Activated T-helper 1 cell treated with anti-CD3 and anti-CD28 coated beads, Interleukin-12 subunit alpha, Interleukin-12 subunit beta, Interleukin-2, Interleukin-4 antibody, amounts not matched to agents 30 ng/mL and 10 ng/mL and 1 ng/mL, durations not matched to agents 14 hours and 24 hours and 36 hours (primary cell): ENCODE measurements at regions of chr3 and their contacts with region 1.

Region 1: DNA sequence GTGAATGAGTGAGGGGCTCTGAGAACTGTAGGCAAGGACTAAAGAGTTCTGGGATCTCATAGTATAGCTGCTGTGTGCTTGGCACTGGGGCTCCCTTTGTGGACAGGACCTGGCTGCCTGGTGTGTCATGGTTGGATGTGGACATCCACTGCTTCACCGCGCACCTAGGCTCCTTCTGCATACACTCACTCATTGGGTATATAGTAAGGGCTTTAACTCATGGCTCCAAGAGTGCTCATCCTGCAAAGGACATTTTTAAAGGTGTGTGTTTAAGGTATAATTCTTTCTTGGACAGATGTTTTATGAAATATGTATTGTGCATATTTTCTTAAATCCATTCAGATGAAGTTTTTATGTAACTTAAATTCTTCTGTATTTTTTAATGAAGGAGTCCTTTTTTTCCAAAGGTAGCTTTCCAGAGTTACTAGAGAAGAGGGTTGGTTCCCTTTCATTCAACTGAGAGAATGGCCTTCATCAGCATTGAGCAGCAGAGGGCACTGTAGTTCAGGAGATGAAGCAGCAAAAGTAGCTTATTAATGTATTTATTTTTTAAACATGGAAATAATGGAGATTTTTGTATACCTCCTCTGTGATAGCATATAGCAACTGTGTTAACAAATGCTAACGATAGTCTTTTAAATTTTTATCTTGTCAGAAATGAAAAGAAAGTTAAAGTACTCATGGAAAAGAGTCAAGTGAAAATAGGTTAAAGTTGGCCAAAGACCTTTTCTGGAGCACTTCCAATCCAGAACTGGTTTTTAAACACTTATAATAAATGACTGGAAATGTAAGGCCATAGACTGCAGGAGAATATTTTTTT is 25.2 kb downstream of the OXNAD1 start:
- DNase-seq: no peak
- H3K4me3 Mint-ChIP-seq: peak overlapping the region; percentile 91
- H3K27ac Mint-ChIP-seq: peak overlapping the region; percentile 80
- H3K4me1 Mint-ChIP-seq: peaks cover 80% of the 10 kb centered on the region
- H3K27me3 Mint-ChIP-seq: no peaks in the 10 kb centered on the region

Region 2: DNA sequence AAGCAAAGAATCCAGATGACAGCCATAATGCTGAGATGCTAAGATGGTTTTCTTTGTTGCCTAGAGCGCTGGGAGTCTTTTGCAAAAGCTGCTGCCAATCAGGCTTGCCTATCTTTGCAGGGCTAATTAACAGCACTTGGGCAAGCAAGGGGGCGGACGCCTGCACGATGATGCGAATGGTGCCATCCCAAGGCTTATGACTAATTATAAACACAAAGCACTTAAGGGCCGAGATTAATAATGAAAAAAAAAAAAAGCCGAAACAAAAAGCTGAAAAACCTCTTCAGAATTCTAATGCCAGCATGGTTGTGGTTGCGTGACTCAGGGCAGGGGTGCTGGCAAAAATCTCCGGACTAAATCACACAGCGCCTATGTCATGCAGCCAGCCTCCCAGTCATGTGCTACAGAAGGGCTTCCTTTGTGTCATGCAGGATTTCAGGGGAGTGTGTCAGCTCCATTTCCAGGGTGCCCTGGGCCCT is 307.5 kb before region 1 on chr3:
- intact Hi-C with region 1: no loop called
- DNase-seq: no peak
- H3K4me3 Mint-ChIP-seq: no peak overlapping the region
- H3K27ac Mint-ChIP-seq: no peak overlapping the region
- H3K4me1 Mint-ChIP-seq: no peaks in the 10 kb centered on the region
- H3K27me3 Mint-ChIP-seq: peaks cover 8% of the 10 kb centered on the region

Region 3: DNA sequence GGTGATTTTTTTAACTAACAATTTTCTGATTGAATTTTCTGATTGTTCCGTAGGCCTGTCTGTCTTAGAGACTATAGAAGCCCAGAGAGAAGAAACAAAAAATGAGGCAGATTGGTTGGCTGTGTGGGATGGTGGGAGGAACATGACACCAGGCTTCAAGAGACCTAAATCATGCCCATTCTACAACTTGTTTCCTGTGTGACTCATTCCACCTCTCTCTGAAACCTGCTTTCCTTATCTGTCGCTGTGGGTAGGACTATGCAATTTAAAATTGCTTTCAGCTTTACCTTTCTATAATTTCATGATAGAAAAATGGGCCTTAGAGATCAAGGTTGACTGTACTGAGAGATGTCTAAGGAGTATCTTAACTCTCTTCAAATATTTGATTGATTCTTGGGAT is 19.3 kb after region 1 on chr3:
- intact Hi-C with region 1: loop called (anchors 1 kb)
- DNase-seq: peak; percentile 50
- H3K4me3 Mint-ChIP-seq: peak overlapping the region; percentile 72
- H3K27ac Mint-ChIP-seq: peak overlapping the region; percentile 92
- H3K4me1 Mint-ChIP-seq: peaks cover 84% of the 10 kb centered on the region
- H3K27me3 Mint-ChIP-seq: no peaks in the 10 kb centered on the region

Region 4: DNA sequence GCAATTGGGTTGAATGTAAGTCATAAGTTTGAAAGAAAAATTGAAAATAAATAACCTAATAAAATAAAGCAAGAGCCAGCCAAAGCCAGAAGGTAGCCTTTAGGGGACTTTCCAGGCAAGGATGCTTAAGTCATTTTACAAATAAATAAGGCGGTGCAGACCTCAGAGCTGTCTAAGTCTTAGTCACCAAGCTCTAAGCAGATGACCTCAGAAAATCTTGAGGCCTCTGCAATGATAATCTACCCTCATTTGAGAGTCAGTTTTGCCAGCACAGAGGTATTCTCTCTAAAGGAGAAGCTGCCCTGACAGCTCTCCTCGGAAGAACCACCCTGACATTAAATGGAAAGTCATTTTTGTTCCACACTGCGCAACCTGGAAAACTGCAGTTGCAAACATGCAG is 88.7 kb after region 1 on chr3:
- intact Hi-C with region 1: loop called (anchors 2 kb)
- DNase-seq: peak; percentile 28
- H3K4me3 Mint-ChIP-seq: peak overlapping the region; percentile 31
- H3K27ac Mint-ChIP-seq: peak overlapping the region; percentile 94
- H3K4me1 Mint-ChIP-seq: peaks cover 95% of the 10 kb centered on the region
- H3K27me3 Mint-ChIP-seq: no peaks in the 10 kb centered on the region

Region 5: DNA sequence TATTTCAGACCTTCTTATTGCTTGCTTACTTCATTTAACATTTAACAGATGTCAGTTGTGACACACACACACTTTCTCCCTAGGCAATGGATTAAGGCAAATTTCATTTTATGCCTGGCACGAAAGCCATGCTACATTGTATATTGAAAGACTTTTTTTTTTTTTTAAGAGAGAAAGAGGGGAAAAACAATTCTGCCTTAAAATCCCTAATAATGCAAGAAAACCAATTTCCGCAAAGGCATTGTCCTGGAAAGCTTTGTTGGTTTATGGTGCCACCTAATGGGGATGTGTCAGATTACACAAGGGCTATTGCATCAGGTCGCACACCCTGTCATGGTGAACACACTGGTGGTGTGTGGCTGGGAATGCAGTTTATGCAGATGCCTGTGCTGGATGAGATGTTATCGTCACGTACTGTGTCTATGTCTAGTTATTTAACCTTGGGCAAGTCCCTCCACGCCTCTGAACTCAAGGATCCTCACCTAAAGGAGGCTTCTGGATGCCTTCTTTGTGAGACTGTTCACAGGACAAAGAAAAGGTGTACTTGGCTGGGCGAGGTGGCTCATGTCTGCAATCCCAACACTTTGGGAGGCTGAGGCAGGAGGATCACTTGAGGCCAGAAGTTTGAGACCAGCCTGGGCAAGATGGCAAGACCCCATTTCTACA is 260.6 kb after region 1 on chr3:
- intact Hi-C with region 1: loop called (anchors 1 kb)
- DNase-seq: peak; percentile 67
- H3K4me3 Mint-ChIP-seq: no peak overlapping the region
- H3K27ac Mint-ChIP-seq: peak overlapping the region; percentile 71
- H3K4me1 Mint-ChIP-seq: peaks cover 27% of the 10 kb centered on the region
- H3K27me3 Mint-ChIP-seq: peaks cover 6% of the 10 kb centered on the region

Region 6: GRCh38 chr3:16896820-16897219 is 606.6 kb after region 1 on chr3:
- intact Hi-C with region 1: no loop called
- DNase-seq: no peak
- H3K4me3 Mint-ChIP-seq: no peak overlapping the region
- H3K27ac Mint-ChIP-seq: no peak overlapping the region
- H3K4me1 Mint-ChIP-seq: peaks cover 71% of the 10 kb centered on the region
- H3K27me3 Mint-ChIP-seq: peaks cover under 1% of the 10 kb centered on the region

Region 7: DNA sequence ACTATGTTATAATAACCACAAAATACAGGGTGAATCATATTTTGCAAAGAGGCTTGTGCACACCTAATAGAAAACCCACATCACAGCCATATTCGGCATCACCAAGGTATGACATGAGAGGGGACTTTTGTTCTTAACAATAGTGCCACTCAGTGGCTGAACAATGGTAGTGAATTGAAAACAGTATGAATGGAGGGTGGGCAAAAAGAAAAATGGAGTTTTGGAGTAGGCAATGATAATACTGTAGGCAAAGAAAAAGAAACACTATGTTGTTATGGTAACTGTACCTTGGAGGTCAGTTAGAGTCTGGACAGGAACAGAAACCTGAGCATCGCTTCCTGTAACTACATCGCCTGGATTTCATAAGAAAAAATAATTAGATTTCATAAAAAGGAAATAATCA is 943.2 kb after region 1 on chr3:
- intact Hi-C with region 1: loop called (anchors 5 kb)
- DNase-seq: peak; percentile 27
- H3K4me3 Mint-ChIP-seq: no peak overlapping the region
- H3K27ac Mint-ChIP-seq: no peak overlapping the region
- H3K4me1 Mint-ChIP-seq: peaks cover 13% of the 10 kb centered on the region
- H3K27me3 Mint-ChIP-seq: no peaks in the 10 kb centered on the region